Aorta (tissue), 5 donors: ENCODE measurements at regions of chrX and their contacts with region 1.

Region 1: DNA sequence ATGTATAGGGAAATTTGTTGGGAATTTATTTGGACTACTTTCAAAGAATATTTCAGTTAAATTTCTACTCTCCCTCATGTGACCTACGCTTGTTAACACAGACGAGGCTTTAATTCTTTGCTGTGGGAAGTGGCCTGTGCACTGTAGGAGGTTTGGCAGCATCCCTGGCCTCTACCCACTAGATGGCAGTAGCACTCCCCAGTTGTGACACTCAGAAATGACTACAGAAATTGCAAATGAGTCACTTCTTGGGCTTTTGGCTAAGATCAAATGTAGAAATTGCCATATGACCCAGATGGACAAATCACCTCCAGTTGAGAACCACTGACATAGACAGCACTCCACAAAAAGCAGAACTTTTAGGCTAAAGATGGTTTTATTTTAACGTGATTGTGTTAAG is 22.1 kb downstream of the PIR start:
- DNase-seq: peak; percentile 64 to 78
- ATAC-seq: no peak
- H3K4me3 ChIP-seq: no peak overlapping the region
- H3K27ac ChIP-seq: no peak overlapping the region
- H3K4me1 ChIP-seq: no peaks in the 10 kb centered on the region
- H3K27me3 ChIP-seq: no peaks in the 10 kb centered on the region

Region 2: DNA sequence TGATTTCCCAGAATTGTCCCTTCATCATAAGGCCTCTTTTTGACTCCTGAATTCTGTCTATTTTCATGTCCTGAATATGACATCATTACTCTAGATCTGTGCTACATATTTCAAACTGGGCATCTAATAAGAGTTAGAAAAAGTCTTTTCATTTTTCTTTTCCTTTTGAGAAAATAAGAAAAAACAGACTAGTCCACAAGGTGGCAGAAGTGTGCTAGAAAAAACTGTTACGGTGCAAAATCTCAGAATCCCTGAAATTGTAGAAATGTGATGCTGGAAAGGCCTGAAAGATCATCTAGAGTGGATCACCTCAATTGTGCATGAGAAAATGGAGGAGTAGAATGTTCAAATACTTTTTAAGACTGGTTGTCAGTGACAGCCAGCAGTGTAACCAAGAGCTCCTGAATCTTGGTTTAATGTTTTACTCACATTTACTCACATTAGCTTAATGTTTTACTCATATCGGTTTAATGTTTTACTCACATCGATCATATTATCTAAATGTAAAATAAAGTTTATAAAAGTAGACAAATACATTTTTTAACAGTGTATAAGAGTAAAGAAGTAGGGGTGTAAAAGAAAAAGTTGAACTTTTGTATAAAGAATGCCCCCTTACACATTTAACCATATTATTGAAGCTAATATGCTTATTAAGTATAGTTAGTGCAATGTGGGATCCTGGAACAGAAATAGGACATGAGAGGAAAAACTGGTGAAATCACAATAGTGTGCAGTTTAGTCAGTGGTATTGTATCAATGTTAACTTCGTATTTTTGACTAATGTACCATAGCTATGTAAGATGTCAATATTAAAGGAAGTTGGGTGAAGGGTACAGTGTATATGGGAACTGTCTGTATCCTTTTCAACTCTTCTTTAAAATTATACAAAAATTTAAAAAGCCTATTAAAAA is 170.8 kb before region 1 on chrX:
- intact Hi-C with region 1: loop called in 1 of 2 experiments (anchors 10 kb)
- DNase-seq: no peak
- ATAC-seq: no peak
- H3K4me3 ChIP-seq: no peak overlapping the region
- H3K27ac ChIP-seq: no peak overlapping the region
- H3K4me1 ChIP-seq: no peaks in the 10 kb centered on the region
- H3K27me3 ChIP-seq: no peaks in the 10 kb centered on the region

Region 3: DNA sequence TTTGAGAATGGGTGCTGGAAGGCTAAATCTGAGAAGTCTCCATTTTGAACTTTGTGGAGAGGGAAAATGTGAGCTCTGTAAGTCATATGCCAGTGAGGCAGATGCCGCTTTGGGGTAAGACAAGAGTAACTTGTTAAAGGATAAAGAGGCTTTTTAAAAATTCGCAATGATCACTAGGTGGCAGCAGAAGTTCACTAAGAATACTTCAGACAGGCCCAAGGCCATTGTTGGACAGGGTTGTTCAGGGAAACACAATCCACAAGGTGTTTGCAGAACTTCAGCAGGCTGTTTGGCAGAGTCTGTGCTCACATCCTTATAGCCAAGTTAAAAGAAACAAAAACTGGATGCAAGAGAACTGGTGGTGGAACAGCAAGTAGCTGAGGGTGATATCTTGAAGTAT is 122.0 kb before region 1 on chrX:
- intact Hi-C with region 1: loop called (anchors 2 to 10 kb)
- DNase-seq: no peak
- ATAC-seq: peak; percentile 70
- H3K4me3 ChIP-seq: no peak overlapping the region
- H3K27ac ChIP-seq: no peak overlapping the region
- H3K4me1 ChIP-seq: no peaks in the 10 kb centered on the region
- H3K27me3 ChIP-seq: no peaks in the 10 kb centered on the region

Region 4: GRCh38 chrX:15564981-15565579 is 94.1 kb after region 1 on chrX:
- intact Hi-C with region 1: loop called (anchors 5 kb)
- DNase-seq: peak; percentile 57 to 82
- ATAC-seq: peak; percentile 80
- H3K4me3 ChIP-seq: no peak overlapping the region
- H3K27ac ChIP-seq: no peak overlapping the region
- H3K4me1 ChIP-seq: no peaks in the 10 kb centered on the region
- H3K27me3 ChIP-seq: no peaks in the 10 kb centered on the region